Naive thymus-derived CD4-positive, alpha-beta T cell (primary cell): ENCODE measurements at regions of chr1 and their contacts with region 1.

Region 1: DNA sequence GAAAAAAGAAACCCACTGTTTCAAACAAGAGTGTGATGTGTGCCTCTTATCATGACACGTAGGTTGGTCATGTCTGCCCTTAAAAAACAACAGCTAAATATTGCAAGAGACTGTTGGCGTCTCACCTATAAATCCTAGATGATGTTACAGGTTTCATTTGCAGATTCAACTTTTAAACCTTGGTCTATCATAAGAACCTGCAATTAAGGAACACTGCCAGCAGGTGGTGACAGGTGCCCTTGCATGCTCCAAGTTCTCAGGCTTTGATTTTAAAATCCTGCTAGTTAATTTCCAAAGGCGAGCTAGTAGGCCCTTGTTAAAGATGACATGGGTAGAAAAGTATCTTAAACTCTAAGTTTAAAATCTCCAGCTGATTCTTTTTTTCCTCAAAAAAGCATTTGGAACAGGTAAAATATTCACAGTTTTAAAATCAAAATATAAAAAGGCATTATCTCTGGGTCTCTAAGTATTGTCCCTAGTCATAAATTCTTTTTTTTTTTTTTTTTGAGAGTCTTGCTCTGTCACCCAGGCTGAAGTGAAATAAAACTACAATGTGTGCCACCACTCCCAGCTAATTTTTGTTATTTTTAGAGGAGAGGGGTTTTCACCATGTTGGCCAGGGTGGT is 39.1 kb downstream of the CLSTN1 start:
- DNase-seq: peak; percentile 29 to 78 (median 71)
- ATAC-seq: peak; percentile 65
- H3K4me3 ChIP-seq: no peak overlapping the region
- H3K4me3 Mint-ChIP-seq: peak overlapping the region in 2 of 10 donors; percentile 28 to 38
- H3K27ac ChIP-seq: no peak overlapping the region
- H3K27ac Mint-ChIP-seq: peak overlapping the region in 5 of 9 donors; percentile 23 to 76 (median 49)
- H3K4me1 ChIP-seq: peaks cover 11 to 17% of the 10 kb centered on the region in 2 donors
- H3K4me1 Mint-ChIP-seq: peaks cover 11 to 41% (median 32%) of the 10 kb centered on the region in 7 donors
- H3K27me3 ChIP-seq: no peaks in the 10 kb centered on the region
- H3K27me3 Mint-ChIP-seq: no peaks in the 10 kb centered on the region

Region 2: GRCh38 chr1:9615316-9616063 is 169.1 kb before region 1 on chr1:
- CTCF ChIA-PET with region 1: interaction called, 6 read pairs
- POLR2A ChIA-PET with region 1: no interaction called
- intact Hi-C with region 1: loop called in 1 of 2 experiments (anchors 1 kb)
- DNase-seq: peak in 8 of 9 donors; percentile 40 to 63 (median 55)
- ATAC-seq: peak; percentile 89
- H3K4me3 ChIP-seq: no peak overlapping the region
- H3K4me3 Mint-ChIP-seq: no peak overlapping the region
- H3K27ac ChIP-seq: no peak overlapping the region
- H3K27ac Mint-ChIP-seq: no peak overlapping the region
- H3K4me1 ChIP-seq: no peaks in the 10 kb centered on the region
- H3K4me1 Mint-ChIP-seq: peaks cover 0 to 5% (median 0%) of the 10 kb centered on the region in 7 donors
- H3K27me3 ChIP-seq: no peaks in the 10 kb centered on the region
- H3K27me3 Mint-ChIP-seq: peaks cover 0 to 8% (median 0%) of the 10 kb centered on the region in 5 donors

Region 3: DNA sequence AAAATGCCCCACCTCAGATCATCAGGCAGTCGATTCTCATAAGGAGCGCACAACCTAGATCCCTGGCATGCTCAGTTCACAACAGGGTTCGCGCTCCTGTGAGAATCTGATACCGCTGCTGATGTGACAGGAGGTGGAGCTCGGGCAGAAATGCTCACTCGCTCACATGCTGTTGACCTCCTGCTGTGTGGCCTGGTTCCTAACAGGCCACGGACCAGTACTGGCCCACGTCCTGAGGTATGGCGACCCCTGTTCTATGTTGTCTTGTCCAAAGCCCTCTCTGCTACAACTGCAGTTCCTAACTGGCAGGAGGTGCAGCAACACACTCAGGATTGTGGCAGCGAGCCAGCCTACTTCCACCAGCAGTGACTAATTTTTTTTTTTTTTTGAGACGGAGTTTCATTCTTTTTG is 31.5 kb before region 1 on chr1:
- CTCF ChIA-PET with region 1: no interaction called
- POLR2A ChIA-PET with region 1: no interaction called
- intact Hi-C with region 1: no loop called
- DNase-seq: no peak
- ATAC-seq: no peak
- H3K4me3 ChIP-seq: no peak overlapping the region
- H3K4me3 Mint-ChIP-seq: no peak overlapping the region
- H3K27ac ChIP-seq: no peak overlapping the region
- H3K27ac Mint-ChIP-seq: peak overlapping the region in 1 of 9 donors; percentile 38
- H3K4me1 ChIP-seq: no peaks in the 10 kb centered on the region
- H3K4me1 Mint-ChIP-seq: peaks cover 0 to 19% (median 7%) of the 10 kb centered on the region in 7 donors
- H3K27me3 ChIP-seq: no peaks in the 10 kb centered on the region
- H3K27me3 Mint-ChIP-seq: no peaks in the 10 kb centered on the region

Region 4: DNA sequence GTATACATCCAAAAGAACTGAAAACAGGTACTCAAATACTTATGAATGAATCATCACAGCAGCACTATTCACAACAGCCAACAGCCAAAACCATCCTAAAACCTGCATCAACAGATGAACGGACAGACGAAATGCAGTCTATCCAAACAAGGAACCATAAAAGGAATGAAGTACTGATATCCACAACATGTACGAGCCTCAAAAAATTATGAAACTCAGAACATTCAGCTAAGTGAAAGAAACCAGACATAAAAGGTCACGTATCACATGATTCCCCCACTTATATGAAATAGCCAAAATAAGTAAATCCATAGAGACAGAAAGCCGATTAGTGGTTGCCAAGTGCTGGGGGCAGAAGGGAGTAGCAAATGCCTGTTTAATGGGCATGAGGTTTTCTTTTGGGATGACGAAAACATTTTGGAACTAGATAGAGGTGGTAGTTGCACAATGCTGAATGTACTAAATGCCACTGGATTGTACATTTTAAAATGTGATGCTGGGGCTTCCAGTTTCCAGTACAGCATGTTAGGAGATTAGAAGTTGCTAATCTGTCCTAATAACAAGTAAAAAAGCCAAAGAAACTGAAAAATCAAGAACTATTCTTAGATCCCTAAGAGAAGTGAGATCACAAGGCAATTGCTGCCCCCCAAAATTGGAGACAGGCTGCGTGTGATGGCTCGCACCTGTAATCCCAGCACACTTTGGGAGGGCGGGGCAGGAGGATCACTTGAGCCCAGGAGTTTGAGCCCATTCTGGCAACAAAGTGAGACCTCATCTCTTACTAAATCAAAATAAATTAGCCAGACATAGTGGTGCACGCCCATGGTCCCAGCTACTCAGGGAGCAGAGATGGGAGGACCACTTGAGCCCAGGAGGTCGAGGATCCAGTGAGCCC is 13.9 kb after region 1 on chr1:
- CTCF ChIA-PET with region 1: interaction called, 12 read pairs
- POLR2A ChIA-PET with region 1: interaction called, 3 read pairs
- intact Hi-C with region 1: loop called in 1 of 2 experiments (anchors 1 kb)
- DNase-seq: no peak
- ATAC-seq: no peak
- H3K4me3 ChIP-seq: no peak overlapping the region
- H3K4me3 Mint-ChIP-seq: peak overlapping the region; percentile 14 to 64 (median 30)
- H3K27ac ChIP-seq: no peak overlapping the region
- H3K27ac Mint-ChIP-seq: peak overlapping the region; percentile 9 to 87 (median 68)
- H3K4me1 ChIP-seq: peaks cover 9 to 25% of the 10 kb centered on the region in 2 donors
- H3K4me1 Mint-ChIP-seq: peaks cover 48 to 84% (median 73%) of the 10 kb centered on the region in 7 donors
- H3K27me3 ChIP-seq: no peaks in the 10 kb centered on the region
- H3K27me3 Mint-ChIP-seq: no peaks in the 10 kb centered on the region

Region 5: DNA sequence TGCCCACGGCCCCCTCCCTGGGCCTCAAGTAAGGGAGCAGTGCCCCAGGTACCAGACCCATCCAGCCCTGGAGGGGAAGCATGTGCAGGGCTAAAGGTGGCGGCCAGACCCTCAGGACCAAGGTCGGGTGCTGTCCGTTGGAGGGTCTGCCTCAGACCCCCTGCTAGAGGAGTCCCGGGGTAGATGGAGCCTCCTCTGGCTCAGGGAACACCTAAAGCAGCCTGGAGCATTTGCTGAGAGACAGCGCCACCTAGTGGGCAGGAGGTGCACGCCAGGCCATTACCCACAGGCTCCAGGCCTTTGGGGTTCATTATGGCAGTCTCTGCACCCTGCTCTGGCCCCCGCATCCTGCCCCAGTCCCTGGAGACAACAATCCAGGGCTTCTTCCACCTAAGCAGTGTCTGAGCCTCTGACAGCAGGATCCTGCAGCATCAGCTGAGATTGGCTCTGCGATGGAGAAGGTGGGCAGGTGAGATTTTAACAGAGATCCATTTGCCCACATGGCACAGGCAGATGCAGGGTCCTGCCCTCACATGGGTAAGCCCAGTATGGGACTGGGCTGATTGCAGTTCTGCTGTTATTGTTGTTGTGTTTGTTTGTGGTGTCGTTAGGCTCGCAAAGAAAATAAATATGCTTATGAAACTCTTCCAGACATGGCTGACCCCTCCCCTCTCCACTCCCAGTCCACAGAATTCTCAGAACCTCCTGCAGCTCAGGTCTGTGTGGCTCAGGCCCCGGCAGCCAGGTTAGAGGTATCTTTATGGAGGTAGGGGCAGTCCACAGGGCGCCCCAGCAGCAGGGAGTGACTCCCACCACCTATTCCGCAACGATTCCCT is 83.0 kb after region 1 on chr1:
- CTCF ChIA-PET with region 1: interaction called, 82 read pairs
- POLR2A ChIA-PET with region 1: interaction called, 5 read pairs
- intact Hi-C with region 1: loop called (anchors 1 kb)
- DNase-seq: peak; percentile 70 to 90 (median 84)
- ATAC-seq: peak; percentile 96
- H3K4me3 ChIP-seq: no peak overlapping the region
- H3K4me3 Mint-ChIP-seq: no peak overlapping the region
- H3K27ac ChIP-seq: no peak overlapping the region
- H3K27ac Mint-ChIP-seq: no peak overlapping the region
- H3K4me1 ChIP-seq: no peaks in the 10 kb centered on the region
- H3K4me1 Mint-ChIP-seq: peaks cover 0 to 7% (median 3%) of the 10 kb centered on the region in 7 donors
- H3K27me3 ChIP-seq: no peaks in the 10 kb centered on the region
- H3K27me3 Mint-ChIP-seq: no peaks in the 10 kb centered on the region